Right cardiac atrium (tissue), 5 donors: ENCODE measurements at regions of chr12 and their contacts with region 1.

Region 1: DNA sequence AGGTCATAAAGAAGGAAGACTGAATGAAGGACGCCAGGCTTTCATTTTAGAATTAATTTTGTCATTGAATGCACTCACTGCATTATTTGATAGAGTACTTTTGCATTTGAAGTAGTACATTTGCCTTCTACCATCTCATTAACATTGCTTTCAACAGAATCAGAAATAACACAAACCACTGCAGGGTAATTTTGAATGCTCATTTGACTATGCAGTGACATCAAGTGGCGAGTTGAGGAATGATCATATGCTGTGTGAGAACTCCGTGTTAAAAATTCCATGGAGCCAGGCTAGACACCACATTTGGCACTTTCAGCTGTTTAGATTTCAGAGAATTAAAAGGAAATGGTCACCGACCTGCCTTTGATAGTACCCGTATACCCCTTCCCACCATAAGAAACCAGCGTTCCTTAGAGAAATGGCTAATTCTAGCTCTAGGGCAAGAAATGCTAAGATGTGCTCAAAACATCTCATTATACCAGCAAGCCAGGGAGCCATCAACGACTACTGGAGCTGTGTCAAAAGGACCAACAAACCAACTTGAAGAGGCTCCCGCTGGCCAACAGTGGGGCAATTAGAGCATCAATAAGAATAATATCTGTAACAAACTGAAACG is 16.5 kb downstream of the HEBP1 start:
- DNase-seq: no peak
- ATAC-seq: peak; percentile 62 to 75
- H3K4me3 ChIP-seq: no peak overlapping the region
- H3K27ac ChIP-seq: no peak overlapping the region
- H3K4me1 ChIP-seq: peaks cover 7% of the 10 kb centered on the region
- H3K27me3 ChIP-seq: no peaks in the 10 kb centered on the region

Region 2: DNA sequence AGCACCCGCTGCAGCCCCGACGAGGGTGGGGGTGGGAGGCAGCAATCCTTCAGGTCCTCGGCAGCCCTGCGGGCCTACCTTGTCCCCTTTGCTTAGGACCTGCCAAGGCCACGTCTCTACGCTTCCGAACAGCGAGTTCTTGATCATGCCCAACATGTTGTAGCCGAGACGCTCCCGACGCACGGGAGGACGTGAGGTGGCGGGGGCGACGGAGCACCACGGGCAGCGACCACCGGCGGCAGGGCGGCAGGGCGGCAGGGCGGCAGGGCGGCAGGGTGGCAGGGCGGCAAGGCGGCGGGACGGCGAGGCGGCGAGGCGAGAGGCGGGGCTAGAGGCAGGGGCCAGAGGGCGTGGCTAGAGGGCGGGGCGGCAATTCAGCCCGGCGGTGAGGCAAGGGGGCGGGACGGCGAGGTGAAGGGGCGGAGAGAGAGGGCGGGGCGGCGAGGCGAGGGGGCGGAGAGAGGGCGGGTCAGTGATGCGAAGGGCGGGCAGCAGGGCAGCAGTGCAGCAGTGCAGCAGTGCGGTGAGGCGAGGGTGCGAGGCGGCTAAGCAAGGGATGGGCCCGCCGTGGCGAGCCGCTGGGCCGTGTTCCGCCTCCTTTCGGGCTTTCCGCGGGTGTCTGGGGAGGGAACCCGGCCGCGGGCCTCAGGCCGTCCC is 16.6 kb after region 1 on chr12 and contains the start of gene HEBP1:
- intact Hi-C with region 1: no loop called
- DNase-seq: peak; percentile 95 to 99 (median 98)
- ATAC-seq: peak; percentile 95 to 97
- H3K4me3 ChIP-seq: peak within 1 kb of the TSS; percentile 79
- H3K27ac ChIP-seq: peak within 1 kb of the TSS; percentile 83
- H3K4me1 ChIP-seq: peaks cover 18% of the 10 kb centered on the region
- H3K27me3 ChIP-seq: no peaks in the 10 kb centered on the region
- total RNA-seq, gene HEBP1: 54.4 to 81.0 (median 70.2) TPM

Region 3: DNA sequence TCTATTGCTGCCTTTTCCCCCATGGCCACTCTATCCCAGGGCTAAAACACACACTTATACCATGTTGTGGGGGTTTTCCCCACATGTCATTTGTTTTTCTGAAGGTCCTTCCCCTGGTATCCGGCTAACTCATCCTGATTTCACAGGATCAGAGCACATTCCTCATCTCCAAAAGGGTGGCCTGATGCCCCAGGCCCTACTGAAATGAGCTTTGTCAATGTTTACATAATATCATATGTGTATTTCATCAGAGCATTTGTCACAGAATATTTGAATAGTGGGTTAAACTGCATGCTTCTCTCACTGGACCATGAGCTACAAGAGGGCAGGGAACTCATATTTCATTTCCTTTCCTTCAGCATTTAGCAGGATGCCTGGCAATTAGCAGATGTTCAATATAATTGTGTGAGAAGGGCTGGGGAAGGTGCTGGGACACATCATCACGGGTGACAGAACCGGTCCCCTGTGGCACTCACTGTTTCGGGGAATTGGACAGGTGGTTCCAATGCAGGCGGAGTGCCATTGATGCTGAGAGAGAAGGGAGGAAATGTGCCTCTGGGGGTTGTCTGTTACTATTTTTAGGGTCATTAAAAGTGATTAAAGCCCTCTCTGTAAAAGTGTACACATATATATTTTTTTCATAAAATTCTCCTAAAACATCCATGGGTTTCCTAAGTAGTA is 239.8 kb after region 1 on chr12:
- intact Hi-C with region 1: loop called in 1 of 4 experiments (anchors 10 kb)
- DNase-seq: no peak
- ATAC-seq: no peak
- H3K4me3 ChIP-seq: no peak overlapping the region
- H3K27ac ChIP-seq: no peak overlapping the region
- H3K4me1 ChIP-seq: peaks cover 3% of the 10 kb centered on the region
- H3K27me3 ChIP-seq: no peaks in the 10 kb centered on the region